Upper lobe of right lung (tissue), 1 donor: ENCODE measurements at regions of chr20 and their contacts with region 1.

Region 1: DNA sequence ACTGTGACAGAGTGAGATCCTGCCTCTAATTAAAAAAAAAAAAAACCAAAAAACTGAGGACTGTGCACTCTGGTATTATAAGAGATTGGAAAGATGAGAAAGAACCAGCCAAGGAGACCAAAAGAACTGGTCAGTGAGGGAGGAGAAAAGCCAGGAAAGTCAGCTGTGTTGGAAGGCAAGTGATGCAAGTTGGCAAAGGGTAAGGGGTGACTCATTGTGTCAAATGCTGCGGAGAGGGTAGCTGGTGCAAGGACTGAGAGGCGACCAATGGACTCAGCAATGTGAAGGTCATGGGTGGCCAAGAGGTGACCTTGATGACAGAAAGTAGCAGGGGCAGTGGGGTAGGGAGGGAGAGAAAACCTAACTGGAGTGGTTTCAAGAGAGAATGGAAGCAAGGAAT is 27.4 kb upstream of the LRRN4 start:
- DNase-seq: no peak
- ATAC-seq: no peak
- H3K4me3 ChIP-seq: no peak overlapping the region
- H3K27ac ChIP-seq: no peak overlapping the region
- H3K4me1 ChIP-seq: no peaks in the 10 kb centered on the region
- H3K27me3 ChIP-seq: no peaks in the 10 kb centered on the region
- CTCF ChIP-seq: no peak

Region 2: DNA sequence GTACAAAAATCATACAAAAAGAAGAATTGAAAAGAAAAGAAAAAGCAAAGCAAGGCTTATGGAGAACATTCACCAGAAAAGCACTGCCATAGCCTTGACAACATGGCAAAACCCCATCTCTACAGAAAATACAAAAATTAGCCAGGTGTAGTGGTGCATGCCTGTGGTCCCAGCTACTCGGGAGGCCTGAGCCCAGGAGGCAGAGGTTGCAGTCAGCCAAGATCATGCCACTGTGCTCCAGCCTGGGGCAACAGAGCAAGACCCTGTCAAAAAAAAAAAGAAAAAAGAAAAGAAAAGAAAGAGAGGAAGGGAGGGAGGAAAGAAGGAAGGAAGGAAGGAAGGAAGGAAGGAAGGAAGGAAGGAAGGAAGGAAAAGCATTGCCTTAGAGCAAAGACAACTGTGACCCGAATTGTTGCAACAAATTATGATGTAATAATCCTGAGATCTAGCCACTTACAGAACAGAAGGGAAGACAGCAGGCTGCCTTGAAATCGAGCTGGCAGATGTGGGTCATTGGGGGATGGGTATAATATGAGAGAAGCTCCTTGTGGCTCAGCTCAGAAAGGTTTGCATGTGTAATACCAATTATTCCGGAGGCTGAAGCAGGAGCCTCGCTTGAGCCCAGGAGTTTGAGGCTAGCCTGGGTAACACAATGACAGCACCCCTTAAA is 556.5 kb before region 1 on chr20:
- intact Hi-C with region 1: loop called (anchors 5 kb)
- DNase-seq: no peak
- ATAC-seq: peak; percentile 7
- H3K4me3 ChIP-seq: no peak overlapping the region
- H3K27ac ChIP-seq: no peak overlapping the region
- H3K4me1 ChIP-seq: peaks cover 7% of the 10 kb centered on the region
- H3K27me3 ChIP-seq: no peaks in the 10 kb centered on the region
- CTCF ChIP-seq: no peak

Region 3: DNA sequence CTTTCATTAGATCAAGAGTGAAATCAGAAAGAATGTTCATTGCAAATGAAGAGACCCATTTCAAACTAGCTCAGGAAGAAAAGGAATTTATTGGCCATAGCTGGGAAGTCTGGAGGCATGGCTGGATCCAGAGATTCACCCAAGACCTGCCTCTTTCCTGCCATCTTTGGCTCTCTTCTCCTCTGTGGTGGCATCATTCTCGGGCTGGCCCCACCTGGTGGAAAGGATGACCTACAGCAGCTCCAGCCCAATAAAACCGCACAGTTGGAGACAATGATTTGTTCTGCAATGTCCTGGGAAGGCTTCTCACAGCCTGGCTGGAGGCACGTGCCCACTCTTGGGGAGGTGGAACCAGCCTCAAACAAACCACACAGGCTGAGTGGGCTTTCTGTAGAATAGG is 59.7 kb after region 1 on chr20:
- intact Hi-C with region 1: no loop called
- DNase-seq: no peak
- ATAC-seq: no peak
- H3K4me3 ChIP-seq: no peak overlapping the region
- H3K27ac ChIP-seq: no peak overlapping the region
- H3K4me1 ChIP-seq: no peaks in the 10 kb centered on the region
- H3K27me3 ChIP-seq: peaks cover 11% of the 10 kb centered on the region
- CTCF ChIP-seq: no peak